Naive thymus-derived CD4-positive, alpha-beta T cell (primary cell): ENCODE measurements at regions of chr2 and their contacts with region 1.

Region 1: GRCh38 chr2:135709992-135710391 is 31.7 kb upstream of the UBXN4 start:
- DNase-seq: peak; percentile 37 to 82 (median 69)
- ATAC-seq: peak; percentile 80
- H3K4me3 ChIP-seq: no peak overlapping the region
- H3K4me3 Mint-ChIP-seq: no peak overlapping the region
- H3K27ac ChIP-seq: no peak overlapping the region
- H3K27ac Mint-ChIP-seq: peak overlapping the region in 2 of 9 donors; percentile 3 to 16
- H3K4me1 ChIP-seq: no peaks in the 10 kb centered on the region
- H3K4me1 Mint-ChIP-seq: peaks cover 0 to 4% (median 0%) of the 10 kb centered on the region in 7 donors
- H3K27me3 ChIP-seq: no peaks in the 10 kb centered on the region
- H3K27me3 Mint-ChIP-seq: no peaks in the 10 kb centered on the region

Region 2: DNA sequence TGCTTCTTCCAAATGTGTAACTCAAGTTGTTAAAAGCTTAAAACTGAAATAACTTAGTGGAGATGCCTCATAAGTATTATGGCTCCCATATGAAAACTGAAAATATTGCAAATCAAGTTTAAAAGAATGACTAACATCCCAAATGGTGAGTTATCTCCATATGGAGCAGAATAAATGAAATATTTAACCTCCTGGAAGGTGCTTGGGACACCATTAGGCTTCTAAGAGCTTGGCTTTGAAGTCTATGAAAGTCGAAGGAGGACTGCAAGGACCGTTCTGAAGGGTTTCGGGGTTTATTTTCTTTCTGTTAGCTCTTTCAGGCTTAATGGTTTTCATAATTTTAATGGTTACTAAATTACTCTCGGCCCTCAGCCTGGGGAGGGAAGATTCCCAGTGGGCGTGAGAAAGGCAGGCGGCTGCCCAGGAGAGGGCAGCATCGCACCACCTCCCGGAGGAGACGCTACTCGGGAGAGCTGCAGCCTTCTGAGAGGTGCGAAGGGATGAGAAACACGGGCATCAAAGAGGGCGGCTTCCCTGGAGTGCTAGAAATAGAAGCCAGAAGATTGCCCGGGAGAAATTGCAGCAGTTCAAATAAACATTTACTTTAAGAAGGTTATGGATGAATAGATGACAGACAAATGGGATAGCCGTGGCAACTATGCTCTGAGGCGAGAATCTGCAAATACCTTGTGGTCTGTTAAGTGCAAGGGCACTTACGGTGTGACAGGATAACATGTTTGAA is 705.8 kb before region 1 on chr2:
- CTCF ChIA-PET with region 1: interaction called, 24 read pairs
- POLR2A ChIA-PET with region 1: interaction called, 3 read pairs
- intact Hi-C with region 1: loop called (anchors 1 kb)
- DNase-seq: peak; percentile 32 to 76 (median 62)
- ATAC-seq: peak; percentile 92
- H3K4me3 ChIP-seq: no peak overlapping the region
- H3K4me3 Mint-ChIP-seq: peak overlapping the region in 3 of 10 donors; percentile 17 to 63 (median 21)
- H3K27ac ChIP-seq: no peak overlapping the region
- H3K27ac Mint-ChIP-seq: no peak overlapping the region
- H3K4me1 ChIP-seq: no peaks in the 10 kb centered on the region
- H3K4me1 Mint-ChIP-seq: peaks cover 0 to 8% (median 5%) of the 10 kb centered on the region in 7 donors
- H3K27me3 ChIP-seq: no peaks in the 10 kb centered on the region
- H3K27me3 Mint-ChIP-seq: peaks cover 6 to 22% (median 13%) of the 10 kb centered on the region in 5 donors

Region 3: DNA sequence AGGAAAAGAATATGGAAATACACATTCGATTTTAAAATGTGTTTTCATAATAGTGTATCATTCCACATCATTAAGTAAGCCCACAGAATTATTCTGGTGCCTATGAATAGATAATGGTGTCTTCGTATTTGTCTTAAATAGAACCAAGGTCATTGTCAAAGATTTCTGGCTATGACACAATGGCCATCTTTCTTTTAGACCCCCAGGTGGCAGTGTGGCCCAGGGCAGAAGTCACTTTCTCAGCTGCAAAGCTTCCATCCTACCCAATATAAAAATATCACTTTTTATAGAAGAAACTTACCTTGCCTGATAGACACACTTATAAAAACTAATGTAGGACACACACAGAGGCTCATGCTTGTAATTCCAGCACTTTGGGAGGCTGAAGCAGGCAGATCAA is 236.4 kb before region 1 on chr2:
- CTCF ChIA-PET with region 1: interaction called, 26 read pairs
- POLR2A ChIA-PET with region 1: no interaction called
- intact Hi-C with region 1: loop called in 1 of 2 experiments (anchors 1 kb)
- DNase-seq: peak in 6 of 9 donors; percentile 2 to 28 (median 20)
- ATAC-seq: peak; percentile 38
- H3K4me3 ChIP-seq: no peak overlapping the region
- H3K4me3 Mint-ChIP-seq: no peak overlapping the region
- H3K27ac ChIP-seq: no peak overlapping the region
- H3K27ac Mint-ChIP-seq: no peak overlapping the region
- H3K4me1 ChIP-seq: no peaks in the 10 kb centered on the region
- H3K4me1 Mint-ChIP-seq: no peaks in the 10 kb centered on the region
- H3K27me3 ChIP-seq: no peaks in the 10 kb centered on the region
- H3K27me3 Mint-ChIP-seq: no peaks in the 10 kb centered on the region

Region 4: DNA sequence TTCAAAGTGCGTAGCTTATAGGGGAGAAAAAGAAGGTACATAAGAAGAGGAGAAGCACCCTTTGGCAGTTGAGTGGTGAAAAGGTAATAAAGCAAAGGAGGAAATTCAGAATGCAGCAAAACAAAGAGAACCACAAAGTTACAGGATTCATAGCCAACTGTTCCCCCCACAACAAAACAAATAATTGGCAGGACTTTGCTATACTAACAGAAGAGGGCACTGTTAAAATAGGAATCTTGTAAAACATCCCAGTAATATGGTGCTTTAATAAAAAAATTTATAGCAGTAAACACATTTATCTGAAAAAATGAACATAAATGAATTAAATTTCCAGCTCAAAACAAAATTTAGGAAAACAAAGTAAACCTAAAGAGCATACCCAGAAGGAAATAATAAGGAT is 136.4 kb before region 1 on chr2:
- CTCF ChIA-PET with region 1: no interaction called
- POLR2A ChIA-PET with region 1: no interaction called
- intact Hi-C with region 1: loop called in 1 of 2 experiments (anchors 2 kb)
- DNase-seq: no peak
- ATAC-seq: no peak
- H3K4me3 ChIP-seq: no peak overlapping the region
- H3K4me3 Mint-ChIP-seq: no peak overlapping the region
- H3K27ac ChIP-seq: no peak overlapping the region
- H3K27ac Mint-ChIP-seq: no peak overlapping the region
- H3K4me1 ChIP-seq: no peaks in the 10 kb centered on the region
- H3K4me1 Mint-ChIP-seq: peaks cover 0 to 9% (median 6%) of the 10 kb centered on the region in 7 donors
- H3K27me3 ChIP-seq: no peaks in the 10 kb centered on the region
- H3K27me3 Mint-ChIP-seq: no peaks in the 10 kb centered on the region

Region 5: DNA sequence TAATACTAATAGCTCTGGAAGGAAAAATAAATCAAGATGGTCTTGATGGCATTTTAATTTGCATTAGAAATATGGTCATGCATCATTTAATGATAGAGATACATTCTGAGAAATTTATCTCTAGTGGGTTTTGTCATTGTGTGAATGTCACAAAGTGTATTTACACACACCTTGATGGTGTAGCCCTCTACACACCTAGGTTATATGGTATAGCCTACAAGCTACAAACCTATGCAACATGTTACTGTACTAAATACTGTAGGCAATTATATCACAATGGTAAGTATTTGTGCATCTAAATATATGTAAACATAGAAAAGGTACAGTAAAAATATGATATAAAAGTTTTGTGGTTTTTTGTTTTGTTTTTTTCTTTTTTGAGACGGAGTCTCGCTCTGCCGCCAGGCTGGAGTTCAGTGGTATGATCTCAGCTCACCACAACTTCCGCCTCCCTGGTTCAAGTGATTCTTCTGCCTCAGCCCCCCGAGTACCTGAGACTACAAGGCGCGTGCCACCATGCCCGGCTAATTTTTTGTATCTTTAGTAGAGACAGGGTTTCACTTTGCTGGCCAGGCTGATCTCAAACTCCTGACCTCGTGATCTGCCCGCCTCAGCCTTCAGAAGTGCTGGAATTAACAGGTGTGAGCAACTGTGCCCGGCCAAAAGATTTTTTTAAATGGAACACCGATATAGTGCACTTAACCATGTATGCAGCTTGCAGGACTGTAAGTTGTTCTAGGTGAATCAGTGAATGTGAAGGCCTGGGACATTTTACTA is 52.0 kb before region 1 on chr2:
- CTCF ChIA-PET with region 1: interaction called, 10 read pairs
- POLR2A ChIA-PET with region 1: no interaction called
- intact Hi-C with region 1: no loop called
- DNase-seq: peak in 8 of 9 donors; percentile 12 to 71 (median 64)
- ATAC-seq: peak; percentile 81
- H3K4me3 ChIP-seq: no peak overlapping the region
- H3K4me3 Mint-ChIP-seq: peak overlapping the region; percentile 61 to 91 (median 82)
- H3K27ac ChIP-seq: peak overlapping the region; percentile 42
- H3K27ac Mint-ChIP-seq: peak overlapping the region; percentile 58 to 97 (median 89)
- H3K4me1 ChIP-seq: peaks cover 6% of the 10 kb centered on the region in 2 donors
- H3K4me1 Mint-ChIP-seq: peaks cover 0 to 26% (median 12%) of the 10 kb centered on the region in 7 donors
- H3K27me3 ChIP-seq: no peaks in the 10 kb centered on the region
- H3K27me3 Mint-ChIP-seq: no peaks in the 10 kb centered on the region